ENCODE measurements at regions of chr12 and their contacts with region 1.

Region 1: DNA sequence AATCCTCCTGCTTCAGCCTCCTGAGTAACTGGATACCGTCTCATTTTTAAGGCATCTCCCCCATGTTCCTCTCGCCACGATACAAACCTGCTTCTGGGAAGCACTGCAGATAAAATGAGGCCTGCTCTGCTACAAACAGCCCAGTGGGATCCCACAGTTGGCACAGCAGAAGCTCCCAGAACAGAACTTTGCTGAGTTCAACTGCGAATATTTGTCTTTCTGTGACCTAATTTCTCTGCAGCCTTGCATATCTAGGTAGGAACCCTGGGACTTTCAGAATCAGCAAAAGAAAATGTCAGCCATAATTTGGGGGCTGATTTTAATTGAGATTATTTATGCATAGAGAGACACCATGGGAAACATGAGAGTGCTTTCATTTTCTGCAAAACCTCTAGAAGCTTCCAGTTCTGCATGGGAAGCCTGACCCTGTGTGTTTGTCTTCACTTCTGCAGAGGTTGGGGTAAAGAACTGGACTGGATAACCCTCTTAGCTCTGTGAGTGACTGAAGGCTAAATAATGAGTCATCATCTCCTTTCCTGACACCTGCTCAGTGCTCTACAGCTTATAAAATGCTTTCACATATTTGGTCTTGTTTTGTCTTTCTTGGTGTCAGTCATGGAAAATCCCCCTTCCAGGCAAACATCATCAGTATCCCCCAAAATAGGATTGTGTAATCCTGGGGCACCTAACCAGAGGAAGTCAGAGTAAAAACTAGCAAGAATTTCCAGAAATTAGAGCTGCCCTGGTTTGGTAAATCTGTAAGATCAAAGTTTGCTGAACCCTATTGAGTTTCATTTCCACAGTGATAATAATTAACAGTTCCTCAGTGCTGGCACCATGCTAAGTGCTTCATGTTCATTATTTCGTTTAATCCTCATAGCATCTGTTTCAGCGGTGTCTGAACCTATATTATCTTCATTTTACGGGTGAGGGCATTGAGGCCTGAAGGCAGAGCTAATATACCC is 185.8 kb downstream of the SLC15A4 start:
- DNase-seq: no peak
- H3K4me3 ChIP-seq: no peak overlapping the region
- H3K27ac ChIP-seq: no peak overlapping the region
- H3K4me1 ChIP-seq: no peaks in the 10 kb centered on the region
- H3K27me3 ChIP-seq: no peaks in the 10 kb centered on the region
- CTCF ChIP-seq: no peak
- POLR2A ChIP-seq: no peak

Region 2: GRCh38 chr12:129862561-129863175 is 1224.7 kb after region 1 on chr12:
- intact Hi-C with region 1: loop called (anchors 5 kb)
- DNase-seq: no peak
- H3K4me3 ChIP-seq: no peak overlapping the region
- H3K27ac ChIP-seq: no peak overlapping the region
- H3K4me1 ChIP-seq: no peaks in the 10 kb centered on the region
- H3K27me3 ChIP-seq: no peaks in the 10 kb centered on the region
- CTCF ChIP-seq: no peak
- POLR2A ChIP-seq: no peak

Measured in breast epithelium (tissue), 4 donors.